Posterior cingulate gyrus (tissue), 11 donors: ENCODE measurements at regions of chr5 and their contacts with region 1.

Region 1: DNA sequence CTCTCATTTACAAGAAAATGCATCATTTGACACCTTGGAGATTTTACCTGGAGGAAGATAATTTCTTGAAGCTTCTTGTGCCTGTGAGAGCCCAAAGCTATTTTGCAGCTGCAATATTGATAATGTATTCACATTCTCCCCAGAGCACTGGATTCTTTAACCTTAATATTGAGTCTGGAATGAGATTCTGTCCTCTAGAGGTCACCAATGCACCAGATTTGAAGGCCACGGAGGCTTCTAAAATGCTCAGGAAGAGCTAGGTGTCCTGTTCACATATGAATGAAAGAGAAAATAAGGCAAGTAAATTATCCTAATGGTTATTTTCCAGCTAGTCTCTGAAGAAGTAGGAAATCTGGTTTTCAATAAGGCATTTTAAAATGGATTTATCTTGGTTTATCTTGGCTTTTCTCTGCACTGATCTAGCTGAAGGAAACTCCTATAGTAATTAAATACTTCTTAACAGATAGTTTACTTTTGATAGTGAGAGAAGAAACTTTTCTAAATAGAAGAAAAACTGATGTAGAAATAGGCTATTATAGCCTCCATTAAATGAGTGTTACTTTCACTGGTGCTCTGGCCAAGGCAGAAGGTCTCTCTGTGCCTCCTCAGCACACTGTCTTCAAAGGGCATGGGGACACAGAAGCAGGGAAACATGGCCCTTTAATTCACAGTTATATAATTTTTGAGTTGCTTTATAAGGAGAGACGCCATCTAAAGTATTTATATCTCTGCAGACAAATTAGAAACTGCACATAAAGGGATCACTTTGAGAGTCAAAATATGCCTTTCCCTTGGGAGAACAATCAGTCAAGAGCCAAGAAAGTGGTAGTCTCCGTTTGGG is 297.0 kb upstream of the ACTBL2 start:
- DNase-seq: peak in 5 of 10 donors; percentile 21 to 81 (median 37)

Region 2: DNA sequence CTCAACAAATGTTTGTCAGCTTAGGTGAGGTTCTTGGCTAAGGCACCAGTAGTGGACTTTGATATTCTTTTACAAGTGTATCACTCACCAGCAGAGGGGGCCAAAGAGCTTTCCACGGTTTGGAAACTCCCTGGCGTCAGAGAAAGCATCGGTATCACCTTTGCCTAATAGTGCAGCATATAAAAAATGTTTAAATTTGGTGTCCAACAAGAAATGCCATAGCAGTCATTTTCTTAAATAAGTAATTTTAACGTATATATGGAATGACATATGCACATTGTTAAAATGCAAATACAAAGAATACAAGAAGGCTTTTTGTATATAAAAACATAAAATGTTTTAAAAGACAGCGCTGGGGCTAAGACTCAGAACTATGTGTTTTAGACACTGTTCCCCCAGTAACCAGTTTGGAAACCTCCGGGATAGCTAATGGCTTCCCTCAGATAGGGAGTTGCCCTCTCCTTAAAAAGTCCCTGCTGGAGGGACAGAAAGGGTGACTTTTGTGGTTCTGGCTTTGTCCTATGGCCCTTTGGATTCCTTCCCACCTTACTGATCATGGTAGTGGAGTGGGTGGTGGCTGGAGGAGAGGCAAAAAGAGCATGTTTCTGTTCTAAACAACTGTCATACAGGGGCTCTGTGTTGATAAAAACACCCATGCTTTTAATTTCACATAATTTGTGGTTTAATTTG is 481.2 kb before region 1 on chr5:
- intact Hi-C with region 1: loop called (anchors 2 kb)
- DNase-seq: peak; percentile 35 to 94 (median 82)

Region 3: GRCh38 chr5:57650360-57651069 is 129.1 kb before region 1 on chr5:
- intact Hi-C with region 1: loop called (anchors 10 kb)
- DNase-seq: no peak

Region 4: DNA sequence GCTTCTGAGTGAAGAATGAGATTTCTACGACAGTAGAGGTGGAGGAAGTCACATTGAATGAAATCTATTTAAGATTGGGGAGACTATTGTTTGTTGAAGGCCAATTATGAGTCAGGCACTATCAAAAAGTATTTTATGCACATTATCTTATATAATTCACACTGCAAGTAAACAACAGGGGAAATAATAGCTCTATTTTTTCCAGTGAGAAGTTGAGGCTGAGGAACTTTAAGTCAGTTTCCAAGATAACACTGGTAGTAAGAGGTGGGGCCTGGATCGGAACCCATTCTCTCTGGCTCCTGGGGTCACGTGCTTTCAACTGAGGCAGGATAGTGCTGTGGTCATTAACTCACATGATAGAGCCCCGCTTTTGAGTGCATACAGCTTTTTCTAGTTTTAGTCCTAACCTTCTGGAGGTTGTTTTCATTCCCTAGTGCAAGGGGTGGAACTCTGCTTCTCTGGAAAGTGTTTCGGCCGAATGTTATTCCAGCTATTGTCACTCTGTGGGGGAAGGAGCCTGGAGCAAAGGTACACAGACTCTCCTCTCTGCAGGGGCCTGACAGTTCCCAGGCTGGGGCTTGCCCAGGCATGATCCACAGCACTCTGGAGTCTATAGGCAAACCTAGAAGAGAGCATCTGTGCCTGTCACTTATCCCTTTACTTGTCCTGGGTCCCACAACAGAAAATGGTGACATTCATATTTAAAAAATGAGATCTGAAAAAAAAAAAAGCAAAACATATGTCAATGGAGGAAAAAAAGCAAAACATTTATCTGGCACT is 55.4 kb after region 1 on chr5:
- intact Hi-C with region 1: no loop called
- DNase-seq: no peak

Region 5: DNA sequence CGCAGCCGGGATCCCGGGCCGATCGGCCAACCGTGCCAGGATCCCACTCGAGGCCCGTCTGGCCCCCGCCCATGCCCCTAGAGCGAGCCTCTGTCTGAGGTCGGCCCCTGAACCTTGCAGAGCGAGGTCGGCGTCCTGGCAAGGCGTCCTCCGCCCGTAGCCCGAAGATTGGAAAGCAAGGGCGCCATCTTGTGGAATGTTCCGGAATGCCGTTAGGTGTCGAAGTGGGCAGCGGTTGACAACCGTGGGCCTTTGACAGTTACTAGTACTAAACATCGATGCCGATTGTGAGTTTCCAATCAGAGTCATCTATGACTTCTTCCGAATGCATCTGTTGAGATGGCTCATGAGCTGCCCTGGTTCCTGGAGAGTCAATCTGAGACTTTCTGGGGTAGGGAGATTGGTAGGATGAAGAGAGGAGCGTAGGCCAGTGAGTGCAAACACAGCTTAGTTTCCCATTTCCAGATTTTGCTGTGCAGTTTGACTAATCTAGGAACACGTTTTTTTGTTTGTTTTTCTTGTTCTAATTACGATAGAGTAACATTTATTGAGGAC is 681.2 kb after region 1 on chr5:
- intact Hi-C with region 1: loop called (anchors 1 kb)
- DNase-seq: peak; percentile 79 to 98 (median 93)